Left colon (tissue), 2 donors: ENCODE measurements at regions of chr7 and their contacts with region 1.

Region 1: DNA sequence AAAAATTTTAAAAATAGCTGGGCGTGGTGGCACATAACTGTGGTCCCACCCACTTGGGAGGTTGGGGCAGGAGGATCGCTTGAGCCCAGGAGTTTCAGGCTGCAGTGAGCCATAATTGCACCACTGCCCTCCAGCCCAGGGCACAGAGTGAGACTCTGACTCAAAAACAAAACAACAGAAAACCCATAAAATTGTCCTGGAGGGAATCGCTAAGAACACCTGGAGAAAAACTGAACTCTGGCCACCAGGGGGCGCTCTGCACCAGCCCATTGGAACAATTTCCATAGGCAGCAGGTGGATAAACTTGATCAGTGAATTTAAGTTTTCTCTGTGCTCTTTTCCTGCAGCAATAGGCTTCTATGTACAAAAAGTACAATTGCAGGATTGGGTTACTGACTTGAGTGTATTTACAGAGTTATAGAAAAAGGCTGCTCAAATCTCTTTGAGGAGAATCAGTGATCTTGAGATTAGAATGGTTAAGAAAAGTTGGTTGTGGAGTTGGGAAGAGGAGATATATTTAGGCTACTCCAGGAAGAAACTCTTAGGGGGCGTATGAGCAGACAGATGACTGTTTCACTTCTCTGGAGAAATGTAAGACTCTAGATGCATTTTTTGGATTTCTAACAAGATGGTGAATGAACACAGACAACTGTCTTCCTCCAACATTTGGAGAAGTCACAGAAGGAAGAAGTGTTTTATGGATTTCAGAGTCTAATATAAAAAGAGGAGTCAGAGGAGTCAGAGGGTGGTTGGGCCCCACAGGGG is 274.9 kb upstream of the GALNT17 start:
- DNase-seq: peak in 1 of 2 donors; percentile 73
- ATAC-seq: no peak

Region 2: DNA sequence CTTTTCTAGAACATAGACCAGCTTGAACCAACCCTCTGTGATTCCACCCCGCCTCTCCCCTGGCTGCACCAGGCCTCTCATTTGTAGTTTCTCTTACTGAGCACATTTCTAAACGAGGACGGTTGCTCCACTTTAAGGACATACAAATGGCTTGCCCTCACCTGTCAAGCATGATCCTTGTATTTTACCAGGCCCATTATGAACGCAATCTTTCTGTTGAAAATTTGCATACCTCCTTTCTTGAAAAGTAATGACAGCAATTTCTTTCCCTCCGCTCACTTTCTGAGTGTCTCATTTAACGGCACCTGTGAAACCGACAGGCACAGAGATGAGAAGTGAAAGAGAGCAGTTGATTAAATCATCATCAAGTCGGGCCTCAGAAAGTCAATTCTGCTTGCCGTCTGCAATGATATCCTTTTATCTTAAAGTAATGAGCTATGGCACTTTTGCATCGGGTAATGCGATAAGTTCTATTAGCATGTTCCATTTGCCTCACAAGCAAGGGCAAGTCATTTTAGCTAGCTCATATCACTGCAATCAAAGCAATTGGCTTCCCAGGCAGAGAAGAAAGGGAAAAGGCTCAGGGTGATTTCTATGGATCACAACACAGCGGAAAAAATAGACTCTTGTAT is 430.7 kb before region 1 on chr7:
- intact Hi-C with region 1: no loop called
- DNase-seq: no peak
- ATAC-seq: no peak

Region 3: DNA sequence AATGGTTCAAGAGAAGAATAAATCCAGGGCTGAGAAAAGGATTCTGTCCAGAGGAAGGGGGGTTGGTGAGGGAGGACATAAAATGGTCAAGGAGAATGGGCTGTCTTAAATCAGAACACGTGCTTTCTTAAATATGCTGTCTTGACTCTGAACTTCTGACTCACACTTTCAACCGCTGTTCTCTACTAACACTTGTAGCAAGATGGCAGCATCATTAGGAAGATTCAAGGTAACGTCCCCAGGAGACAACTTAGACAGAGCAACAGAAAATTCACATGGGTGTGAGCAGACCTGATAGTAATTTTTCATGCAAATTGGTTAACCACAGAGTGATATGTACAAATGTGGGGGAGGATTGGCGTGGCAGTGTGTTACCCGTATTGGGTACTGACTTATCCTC is 148.1 kb after region 1 on chr7:
- intact Hi-C with region 1: no loop called
- DNase-seq: no peak
- ATAC-seq: no peak

Region 4: GRCh38 chr7:71733107-71733870 is 876.2 kb after region 1 on chr7:
- intact Hi-C with region 1: loop called (anchors 1 to 10 kb)
- DNase-seq: peak; percentile 44 to 86
- ATAC-seq: peak; percentile 73